GM12878 (cell line): ENCODE measurements at regions of chr6 and their contacts with region 1.

Region 1: DNA sequence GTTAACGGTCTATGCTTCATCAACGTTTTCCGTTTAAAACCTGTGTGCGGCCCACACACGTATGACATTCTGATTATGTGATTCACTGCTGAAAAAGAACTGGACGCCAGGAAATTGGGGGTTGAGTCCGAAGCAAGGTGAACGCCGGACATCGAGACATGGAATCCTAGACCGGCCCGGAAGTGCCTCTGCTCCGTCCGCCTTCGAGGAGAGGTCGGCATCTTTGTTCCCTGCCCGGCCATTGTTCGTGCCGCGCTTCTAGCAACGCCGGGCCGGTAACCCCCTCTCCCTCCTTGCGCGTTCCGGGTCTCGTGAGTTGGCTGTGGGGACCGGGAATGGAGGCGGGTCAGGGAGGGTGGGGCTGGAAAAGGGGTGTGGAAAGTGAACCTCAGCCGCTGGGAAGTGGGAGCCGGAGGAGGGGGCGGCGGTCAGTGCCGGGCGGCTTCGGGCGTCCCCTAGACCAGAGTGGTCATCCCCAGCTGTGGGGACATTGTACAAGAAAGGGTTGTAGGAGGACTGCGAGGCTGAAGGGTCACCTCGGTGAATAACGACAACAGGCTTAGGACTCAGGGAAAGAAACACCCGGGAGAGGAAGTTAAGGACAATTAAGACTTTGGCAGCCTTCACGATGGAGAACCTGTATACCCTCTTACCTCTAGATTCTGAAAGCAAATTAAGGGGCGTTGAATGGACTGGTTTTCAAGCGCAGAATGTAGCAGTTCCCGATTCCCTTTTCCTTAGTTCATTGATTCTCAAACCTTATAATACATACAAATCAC is at the start of gene ZSCAN9:
- DNase-seq: peak; percentile 44
- ATAC-seq: peak; percentile 98
- H3K4me3 ChIP-seq: peak within 1 kb of the TSS; percentile 89
- H3K27ac ChIP-seq: peak within 1 kb of the TSS; percentile 73
- H3K4me1 ChIP-seq: no peaks in the 10 kb centered on the region
- H3K27me3 ChIP-seq: no peaks in the 10 kb centered on the region
- CTCF ChIP-seq: no peak
- EP300 ChIP-seq: peak; percentile 15 to 35; a peak in 1 of 4 replicates
- POLR2A ChIP-seq: peak; percentile 95
- RAD21 ChIP-seq: no peak
- polyA plus RNA-seq, gene ZSCAN9: 10.2 to 12.4 TPM

Region 2: GRCh38 chr6:28252009-28252975 is 27.0 kb after region 1 on chr6 and contains the start of gene ZKSCAN4:
- CTCF ChIA-PET with region 1: interaction called, 3 read pairs
- POLR2A ChIA-PET with region 1: interaction called, 4 read pairs
- RAD21 ChIA-PET with region 1: interaction called, 6 read pairs
- SMC1A ChIA-PET with region 1: interaction called, 8 read pairs
- in situ Hi-C with region 1: no loop called
- intact Hi-C with region 1: loop called (anchors 1 kb)
- DNase-seq: peak; percentile 67
- ATAC-seq: peak; percentile 93
- H3K4me3 ChIP-seq: peak within 1 kb of the TSS; percentile 99
- H3K27ac ChIP-seq: peak within 1 kb of the TSS; percentile 55
- H3K4me1 ChIP-seq: no peaks in the 10 kb centered on the region
- H3K27me3 ChIP-seq: no peaks in the 10 kb centered on the region
- CTCF ChIP-seq: no peak
- EP300 ChIP-seq: no peak
- POLR2A ChIP-seq: peak; percentile 52
- RAD21 ChIP-seq: peak; percentile 35
- polyA plus RNA-seq, gene ZKSCAN4: 3.0 to 3.3 TPM